ENCODE measurements at regions of chr1 and their contacts with region 1.

Region 1: GRCh38 chr1:169348383-169349036 is 19.1 kb downstream of the NME7 start:
- DNase-seq: no peak
- ATAC-seq: peak; percentile 60 to 73 (median 70)
- H3K4me3 ChIP-seq: no peak overlapping the region
- H3K27ac ChIP-seq: no peak overlapping the region
- H3K4me1 ChIP-seq: no peaks in the 10 kb centered on the region
- H3K27me3 ChIP-seq: no peaks in the 10 kb centered on the region
- CTCF ChIP-seq: peak; percentile 73 to 88 (median 78)
- POLR2A ChIP-seq: no peak

Region 2: GRCh38 chr1:168603501-168604110 is 744.9 kb before region 1 on chr1:
- intact Hi-C with region 1: loop called in 1 of 2 experiments (anchors 10 kb)
- DNase-seq: peak; percentile 69 to 81 (median 78)
- ATAC-seq: peak; percentile 98 to 100 (median 99)
- H3K4me3 ChIP-seq: no peak overlapping the region
- H3K27ac ChIP-seq: no peak overlapping the region
- H3K4me1 ChIP-seq: no peaks in the 10 kb centered on the region
- H3K27me3 ChIP-seq: no peaks in the 10 kb centered on the region
- CTCF ChIP-seq: peak; percentile 83 to 88 (median 85)
- POLR2A ChIP-seq: no peak